ENCODE measurements at regions of chr20 and their contacts with region 1.

Region 1: GRCh38 chr20:63309261-63310071 is 16.5 kb downstream of the COL20A1 start:
- DNase-seq: peak; percentile 74

Region 2: DNA sequence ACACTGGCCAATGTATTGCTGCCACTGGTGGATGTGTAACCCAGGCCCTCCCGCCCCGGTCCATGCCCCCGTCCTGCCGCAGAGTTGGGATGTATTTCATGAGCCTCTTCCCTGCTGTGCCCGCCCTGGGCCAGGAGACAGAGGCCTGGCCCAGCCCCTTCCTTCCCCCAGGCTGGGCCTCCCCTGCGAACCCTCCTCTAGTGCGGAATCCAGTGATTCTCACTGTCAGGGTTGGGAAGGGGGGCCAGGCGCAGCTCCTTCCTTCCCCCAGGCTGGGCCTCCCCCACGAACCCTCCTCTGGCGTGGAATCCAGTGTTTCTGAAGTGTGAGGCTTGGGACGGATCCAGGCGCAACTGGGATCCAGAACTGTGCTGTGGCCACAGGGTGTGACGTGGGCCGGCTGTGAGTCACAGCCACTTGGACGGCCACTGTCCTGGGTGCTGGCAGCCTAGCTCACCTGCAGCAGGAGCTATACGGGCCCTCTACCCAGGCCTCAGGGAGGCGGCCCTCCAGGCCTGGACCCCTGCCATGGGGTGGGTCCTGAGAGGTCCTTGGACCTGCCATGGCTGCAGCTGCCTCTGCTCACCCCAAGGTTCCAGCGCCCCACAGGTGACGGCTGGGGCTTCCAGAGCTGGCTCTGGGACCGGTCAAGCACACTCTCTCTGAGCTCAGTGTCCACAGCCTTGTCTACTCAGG is 11.8 kb after region 1 on chr20:
- CTCF ChIA-PET with region 1: no interaction called
- POLR2A ChIA-PET with region 1: no interaction called
- DNase-seq: no peak

Region 3: GRCh38 chr20:63381807-63382322 is 72.4 kb after region 1 on chr20:
- CTCF ChIA-PET with region 1: interaction called, 44 read pairs
- POLR2A ChIA-PET with region 1: interaction called, 3 read pairs
- DNase-seq: peak; percentile 76

Region 4: GRCh38 chr20:63529861-63530788 is 220.7 kb after region 1 on chr20:
- CTCF ChIA-PET with region 1: no interaction called
- POLR2A ChIA-PET with region 1: no interaction called
- DNase-seq: no peak

Region 5: DNA sequence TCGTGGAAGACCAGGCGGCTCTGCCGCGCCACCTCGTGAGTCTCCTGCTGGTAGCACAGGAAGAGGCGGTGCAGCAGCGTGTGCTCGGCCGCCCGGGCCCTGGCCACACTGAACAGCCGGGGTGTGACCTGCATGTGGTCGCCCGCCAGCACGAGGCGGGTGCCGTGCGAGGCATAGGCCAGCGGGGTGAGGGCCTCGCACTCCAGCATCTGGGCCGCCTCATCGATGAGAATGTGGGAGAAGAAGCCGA is 257.6 kb after region 1 on chr20:
- CTCF ChIA-PET with region 1: no interaction called
- POLR2A ChIA-PET with region 1: no interaction called
- DNase-seq: no peak

Region 6: GRCh38 chr20:63594043-63594561 is 284.6 kb after region 1 on chr20:
- CTCF ChIA-PET with region 1: no interaction called
- POLR2A ChIA-PET with region 1: no interaction called
- DNase-seq: no peak

Measured in HEK293T (cell line).